H1 (cell line): ENCODE measurements at regions of chr2 and their contacts with region 1.

Region 1: DNA sequence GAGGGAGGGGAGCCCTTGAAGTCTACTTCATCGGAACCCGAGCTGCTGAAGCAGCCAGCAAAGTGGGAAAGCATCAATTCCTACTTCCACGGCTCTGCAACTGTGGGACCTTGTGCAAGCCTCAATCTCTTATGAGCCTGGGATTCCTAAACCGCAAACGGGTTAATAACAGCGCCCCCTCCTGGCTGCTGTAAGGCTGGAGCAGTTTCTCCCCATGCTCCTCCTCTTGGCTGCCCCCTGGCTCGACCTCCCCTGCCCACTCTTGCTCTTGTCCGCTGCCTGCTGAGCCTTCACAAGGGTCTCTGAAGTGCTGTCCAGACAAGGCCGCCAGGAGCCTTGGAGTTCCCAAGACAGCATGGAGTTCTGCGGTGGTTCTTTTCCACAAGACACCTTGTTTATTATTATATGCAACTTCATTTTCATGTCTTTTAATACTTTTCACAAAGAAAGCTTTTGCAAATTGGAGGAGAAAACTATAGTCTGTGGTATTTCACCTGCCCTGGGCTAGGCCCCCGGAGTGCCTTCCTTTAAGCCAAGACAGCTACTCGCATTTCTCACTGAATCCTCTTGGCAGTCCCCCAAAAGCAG is 157.2 kb downstream of the DDX1 start:
- DNase-seq: peak; percentile 62 to 90
- H3K4me3 ChIP-seq: no peak overlapping the region
- H3K27ac ChIP-seq: no peak overlapping the region
- H3K4me1 ChIP-seq: peaks cover 5 to 12% (median 10%) of the 10 kb centered on the region in 4 experiments
- H3K27me3 ChIP-seq: no peaks in the 10 kb centered on the region
- CTCF ChIP-seq: peak; percentile 86 to 96 (median 94)
- EP300 ChIP-seq: no peak
- POLR2A ChIP-seq: no peak
- RAD21 ChIP-seq: peak; percentile 76 to 82

Region 2: GRCh38 chr2:15636972-15637785 is 111.7 kb before region 1 on chr2:
- CTCF ChIA-PET with region 1: interaction called, 28 read pairs
- POLR2A ChIA-PET with region 1: interaction called, 6 read pairs
- DNase-seq: peak; percentile 31 to 80
- H3K4me3 ChIP-seq: no peak overlapping the region
- H3K27ac ChIP-seq: no peak overlapping the region
- H3K4me1 ChIP-seq: no peaks in the 10 kb centered on the region; a peak in 1 of 7 replicates
- H3K27me3 ChIP-seq: no peaks in the 10 kb centered on the region
- CTCF ChIP-seq: peak; percentile 68 to 99 (median 92)
- EP300 ChIP-seq: no peak
- POLR2A ChIP-seq: 0 out of 3 replicates have a peak, but pooled peaks of 1 of the 2 experiments have one; percentile 26
- RAD21 ChIP-seq: peak; percentile 100

Region 3: DNA sequence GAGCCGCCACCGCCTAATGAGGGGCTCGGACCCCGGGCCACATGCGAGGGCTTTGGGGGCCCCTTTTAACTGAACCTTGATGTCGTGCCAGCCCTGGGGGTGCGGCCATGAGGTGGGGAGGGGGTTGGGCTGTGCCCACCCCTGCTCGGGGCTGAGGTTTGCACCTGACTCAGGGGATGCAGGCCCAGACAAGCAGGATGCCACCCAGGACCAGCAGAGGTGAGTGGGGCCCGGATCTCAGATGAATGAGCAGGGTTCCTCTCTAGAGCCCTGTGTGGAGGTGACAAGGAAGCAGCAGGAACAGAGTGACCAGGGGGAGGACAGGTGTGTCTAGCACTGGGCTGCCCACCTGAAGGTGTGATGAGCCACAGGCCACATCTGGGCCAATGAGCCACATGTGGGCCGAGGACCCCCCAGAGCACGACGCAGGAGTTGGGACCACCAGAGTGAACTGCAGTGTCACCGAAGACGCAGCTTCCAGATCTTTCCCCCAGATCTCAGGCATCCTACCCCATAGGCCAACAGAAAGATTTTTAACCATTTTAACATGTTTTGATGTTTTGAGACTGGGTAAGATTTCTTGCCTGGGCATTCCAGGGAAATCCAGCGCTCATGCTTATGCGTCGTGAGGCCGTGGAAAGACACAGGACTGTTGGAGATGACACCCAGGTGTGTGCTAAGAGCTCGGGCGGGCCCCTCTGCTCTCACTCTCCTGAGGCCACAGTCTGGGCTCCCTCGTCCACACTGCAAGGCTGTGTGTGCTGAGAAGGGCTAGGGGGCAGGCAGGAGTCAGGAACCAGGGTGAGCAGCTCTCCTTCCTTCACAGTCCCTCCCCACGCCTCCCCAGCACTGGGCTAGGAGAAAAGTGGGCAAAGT is 83.5 kb before region 1 on chr2:
- CTCF ChIA-PET with region 1: interaction called, 15 read pairs
- POLR2A ChIA-PET with region 1: interaction called, 3 read pairs
- DNase-seq: no peak
- H3K4me3 ChIP-seq: no peak overlapping the region
- H3K27ac ChIP-seq: no peak overlapping the region
- H3K4me1 ChIP-seq: peaks cover 0 to 2% (median 0%) of the 10 kb centered on the region in 4 experiments; a peak in 1 of 7 replicates
- H3K27me3 ChIP-seq: no peaks in the 10 kb centered on the region
- CTCF ChIP-seq: peak; percentile 42 to 76 (median 59)
- EP300 ChIP-seq: no peak
- POLR2A ChIP-seq: no peak
- RAD21 ChIP-seq: peak; percentile 63 to 70

Region 4: DNA sequence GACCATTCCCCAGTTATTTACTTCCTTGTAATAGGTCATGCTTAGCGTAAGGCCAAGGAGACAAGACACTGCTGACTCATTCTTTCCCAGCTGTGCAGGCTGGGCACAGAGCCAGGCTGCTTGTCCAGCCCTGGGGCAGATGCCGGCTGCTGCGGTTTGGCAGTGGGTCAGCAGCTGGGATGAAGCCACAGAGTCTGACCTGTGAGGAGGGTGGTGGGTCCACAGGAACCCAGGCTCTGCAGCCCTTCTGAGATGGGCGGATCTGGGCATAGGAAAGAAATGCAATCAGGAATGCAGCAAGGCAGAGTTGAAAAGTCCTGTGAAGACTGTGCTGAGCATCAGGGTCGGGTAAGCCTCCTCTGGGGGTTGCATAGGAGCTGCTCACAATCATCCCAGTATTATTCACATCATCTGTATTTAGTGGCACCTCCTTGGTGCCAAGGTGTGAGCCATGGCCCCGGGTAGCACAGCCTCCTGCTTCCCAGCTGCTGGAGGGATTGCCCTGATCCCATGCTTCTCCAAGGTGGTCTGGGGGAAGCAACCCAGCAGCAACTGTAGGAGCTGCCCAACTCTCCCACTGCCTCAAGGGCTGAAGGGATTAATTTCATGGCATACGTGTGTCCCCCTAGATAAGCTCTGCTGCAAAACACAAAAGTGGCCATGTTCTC is 18.2 kb before region 1 on chr2:
- CTCF ChIA-PET with region 1: interaction called, 29 read pairs
- POLR2A ChIA-PET with region 1: interaction called, 3 read pairs
- DNase-seq: no peak
- H3K4me3 ChIP-seq: no peak overlapping the region
- H3K27ac ChIP-seq: no peak overlapping the region
- H3K4me1 ChIP-seq: peaks cover 0 to under 1% (median 0%) of the 10 kb centered on the region in 4 experiments; a peak in 1 of 7 replicates
- H3K27me3 ChIP-seq: no peaks in the 10 kb centered on the region
- CTCF ChIP-seq: no peak
- EP300 ChIP-seq: no peak
- POLR2A ChIP-seq: no peak
- RAD21 ChIP-seq: no peak

Region 5: GRCh38 chr2:15763106-15763821 is 14.4 kb after region 1 on chr2:
- CTCF ChIA-PET with region 1: interaction called, 29 read pairs
- POLR2A ChIA-PET with region 1: interaction called, 6 read pairs
- DNase-seq: peak in 1 of 2 experiments; percentile 33
- H3K4me3 ChIP-seq: no peak overlapping the region
- H3K27ac ChIP-seq: no peak overlapping the region
- H3K4me1 ChIP-seq: peaks cover 0 to 10% (median 1%) of the 10 kb centered on the region in 4 experiments; a peak in 3 of 7 replicates
- H3K27me3 ChIP-seq: no peaks in the 10 kb centered on the region
- CTCF ChIP-seq: no peak
- EP300 ChIP-seq: no peak
- POLR2A ChIP-seq: no peak
- RAD21 ChIP-seq: no peak

Region 6: DNA sequence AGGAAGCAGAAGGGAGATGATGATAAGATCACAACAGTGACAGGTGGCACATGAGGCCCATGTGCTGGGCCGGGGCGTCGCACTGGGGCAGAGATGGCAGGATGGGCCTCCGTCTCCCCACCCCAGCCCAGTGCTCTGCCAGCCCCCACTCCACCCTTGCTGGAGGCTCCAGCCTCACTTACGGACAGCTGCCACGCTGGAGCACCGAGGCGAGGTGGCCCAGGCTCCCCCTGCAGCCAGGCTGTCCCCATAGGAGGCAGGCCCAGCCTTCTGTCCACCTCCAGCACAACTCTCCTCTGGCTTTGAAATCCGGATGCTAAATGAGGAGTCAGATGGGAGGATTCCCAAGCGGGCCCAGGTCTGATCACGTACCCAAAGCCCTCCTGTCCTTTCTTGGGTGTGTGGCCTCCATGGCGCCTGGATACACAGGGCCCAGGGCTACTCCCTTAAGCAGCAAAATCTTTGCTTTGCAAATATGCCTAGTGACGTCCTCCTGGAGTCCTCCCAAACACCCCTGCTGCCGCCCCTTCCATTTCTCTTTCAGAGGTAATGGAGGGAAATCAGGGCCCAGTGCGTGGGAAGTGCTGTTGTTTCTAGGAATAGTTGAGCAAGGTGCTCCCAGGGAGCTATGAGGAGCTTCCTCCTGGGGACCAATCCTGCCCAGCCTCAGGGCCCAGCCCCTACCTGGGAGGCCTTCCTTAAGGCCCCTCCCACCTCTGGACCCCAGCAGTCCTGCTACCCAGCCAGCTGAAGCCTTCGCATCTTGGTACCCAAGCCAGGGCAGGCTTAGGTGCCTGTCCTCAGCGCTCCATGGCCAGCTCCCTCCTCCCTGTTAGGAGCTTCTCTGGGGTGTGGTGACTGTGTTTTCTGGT is 21.1 kb after region 1 on chr2:
- CTCF ChIA-PET with region 1: interaction called, 21 read pairs
- POLR2A ChIA-PET with region 1: interaction called, 3 read pairs
- DNase-seq: no peak
- H3K4me3 ChIP-seq: no peak overlapping the region
- H3K27ac ChIP-seq: no peak overlapping the region
- H3K4me1 ChIP-seq: peaks cover 0 to 4% (median 1%) of the 10 kb centered on the region in 4 experiments; a peak in 3 of 7 replicates
- H3K27me3 ChIP-seq: no peaks in the 10 kb centered on the region
- CTCF ChIP-seq: no peak
- EP300 ChIP-seq: no peak
- POLR2A ChIP-seq: no peak
- RAD21 ChIP-seq: no peak

Region 7: GRCh38 chr2:15799432-15799827 is 50.6 kb after region 1 on chr2:
- CTCF ChIA-PET with region 1: interaction called, 11 read pairs
- POLR2A ChIA-PET with region 1: no interaction called
- DNase-seq: no peak
- H3K4me3 ChIP-seq: no peak overlapping the region
- H3K27ac ChIP-seq: no peak overlapping the region
- H3K4me1 ChIP-seq: peaks cover 0 to 7% (median 2%) of the 10 kb centered on the region in 4 experiments; a peak in 3 of 7 replicates
- H3K27me3 ChIP-seq: no peaks in the 10 kb centered on the region
- CTCF ChIP-seq: no peak
- EP300 ChIP-seq: no peak
- POLR2A ChIP-seq: no peak
- RAD21 ChIP-seq: no peak